B cell (primary cell): ENCODE measurements at regions of chr18 and their contacts with region 1.

Region 1: DNA sequence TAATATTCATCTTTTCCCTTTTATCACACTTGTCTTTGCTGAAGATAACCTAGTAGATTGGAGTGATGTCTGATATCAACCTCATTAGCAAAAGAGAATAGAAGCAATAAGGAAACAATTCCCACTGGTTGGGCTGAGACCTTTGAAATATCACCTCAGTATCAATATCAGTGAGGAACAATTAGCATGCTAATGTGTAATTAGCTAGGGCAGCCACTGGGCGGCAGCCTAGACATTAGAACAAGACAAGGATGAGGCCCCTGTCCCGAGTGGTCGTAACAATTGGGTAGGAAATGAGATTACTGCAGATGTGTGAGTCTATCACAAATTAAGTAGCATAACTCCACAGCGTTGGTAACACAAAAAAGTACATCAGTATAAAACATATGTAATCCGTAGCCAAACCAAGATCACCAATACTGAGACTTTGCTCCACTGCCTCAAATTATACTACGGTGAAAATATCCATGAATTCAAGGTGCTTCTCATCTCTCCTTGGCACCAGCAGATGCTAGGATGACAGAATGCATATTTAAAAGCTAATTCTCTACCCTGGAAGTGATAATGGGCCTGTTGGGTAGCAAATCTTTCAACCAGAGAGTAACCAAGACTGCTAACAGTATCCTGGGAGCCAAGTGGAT is 99.1 kb downstream of the ALPK2 start:
- DNase-seq: peak; percentile 82
- ATAC-seq: peak; percentile 78
- H3K4me3 ChIP-seq: no peak overlapping the region
- H3K4me3 Mint-ChIP-seq: no peak overlapping the region
- H3K27ac ChIP-seq: no peak overlapping the region
- H3K27ac Mint-ChIP-seq: no peak overlapping the region
- H3K4me1 ChIP-seq: peaks cover 24 to 30% of the 10 kb centered on the region in 2 donors
- H3K4me1 Mint-ChIP-seq: peaks cover 38% of the 10 kb centered on the region
- H3K27me3 ChIP-seq: no peaks in the 10 kb centered on the region
- H3K27me3 Mint-ChIP-seq: no peaks in the 10 kb centered on the region
- CTCF ChIP-seq: peak; percentile 90

Region 2: GRCh38 chr18:58552057-58552461 is 22.2 kb after region 1 on chr18:
- CTCF ChIA-PET with region 1: interaction called, 25 read pairs
- POLR2A ChIA-PET with region 1: interaction called, 3 read pairs
- intact Hi-C with region 1: no loop called
- DNase-seq: peak; percentile 83
- ATAC-seq: peak; percentile 80
- H3K4me3 ChIP-seq: no peak overlapping the region
- H3K4me3 Mint-ChIP-seq: peak overlapping the region; percentile 60
- H3K27ac ChIP-seq: peak overlapping the region in 1 of 2 donors; percentile 9
- H3K27ac Mint-ChIP-seq: peak overlapping the region; percentile 50
- H3K4me1 ChIP-seq: peaks cover 30 to 37% of the 10 kb centered on the region in 2 donors
- H3K4me1 Mint-ChIP-seq: peaks cover 40% of the 10 kb centered on the region
- H3K27me3 ChIP-seq: no peaks in the 10 kb centered on the region
- H3K27me3 Mint-ChIP-seq: no peaks in the 10 kb centered on the region
- CTCF ChIP-seq: no peak

Region 3: DNA sequence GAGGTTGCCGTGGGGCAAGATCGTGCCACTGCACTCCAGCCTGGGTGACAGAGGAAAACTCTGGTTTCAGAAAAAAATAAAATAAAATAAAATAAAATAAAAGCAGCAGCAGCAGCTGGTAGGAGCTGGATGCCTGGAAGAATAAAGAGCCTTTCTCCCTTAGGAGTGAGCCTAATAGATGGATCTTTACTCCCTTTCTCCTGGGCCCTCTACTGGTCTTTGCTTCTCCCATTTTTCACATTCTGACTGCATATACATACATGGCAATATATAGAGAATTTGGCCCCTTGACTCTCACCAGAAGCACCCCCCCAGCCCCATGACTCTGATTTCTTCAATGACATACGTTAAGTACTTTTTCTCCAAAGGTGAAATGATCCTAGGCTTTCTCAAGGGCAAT is 131.6 kb after region 1 on chr18:
- CTCF ChIA-PET with region 1: interaction called, 17 read pairs
- POLR2A ChIA-PET with region 1: no interaction called
- intact Hi-C with region 1: loop called (anchors 1 kb)
- DNase-seq: no peak
- ATAC-seq: no peak
- H3K4me3 ChIP-seq: peak overlapping the region in 1 of 5 experiments; percentile 43
- H3K4me3 Mint-ChIP-seq: peak overlapping the region; percentile 52
- H3K27ac ChIP-seq: peak overlapping the region in 1 of 2 donors; percentile 85
- H3K27ac Mint-ChIP-seq: peak overlapping the region; percentile 66
- H3K4me1 ChIP-seq: peaks cover 78% of the 10 kb centered on the region in 2 donors
- H3K4me1 Mint-ChIP-seq: peaks cover 82% of the 10 kb centered on the region
- H3K27me3 ChIP-seq: no peaks in the 10 kb centered on the region
- H3K27me3 Mint-ChIP-seq: no peaks in the 10 kb centered on the region
- CTCF ChIP-seq: no peak

Region 4: GRCh38 chr18:58676270-58676669 is 146.4 kb after region 1 on chr18:
- CTCF ChIA-PET with region 1: interaction called, 40 read pairs
- POLR2A ChIA-PET with region 1: interaction called, 4 read pairs
- intact Hi-C with region 1: loop called (anchors 1 kb)
- DNase-seq: no peak
- ATAC-seq: no peak
- H3K4me3 ChIP-seq: no peak overlapping the region
- H3K4me3 Mint-ChIP-seq: peak overlapping the region; percentile 8
- H3K27ac ChIP-seq: no peak overlapping the region
- H3K27ac Mint-ChIP-seq: peak overlapping the region; percentile 32
- H3K4me1 ChIP-seq: peaks cover 42 to 47% of the 10 kb centered on the region in 2 donors
- H3K4me1 Mint-ChIP-seq: peaks cover 60% of the 10 kb centered on the region
- H3K27me3 ChIP-seq: no peaks in the 10 kb centered on the region
- H3K27me3 Mint-ChIP-seq: no peaks in the 10 kb centered on the region
- CTCF ChIP-seq: no peak

Region 5: GRCh38 chr18:58761241-58761969 is 231.6 kb after region 1 on chr18:
- CTCF ChIA-PET with region 1: interaction called, 337 read pairs
- POLR2A ChIA-PET with region 1: interaction called, 4 read pairs
- intact Hi-C with region 1: loop called (anchors 1 kb)
- DNase-seq: peak; percentile 42
- ATAC-seq: peak; percentile 52
- H3K4me3 ChIP-seq: no peak overlapping the region
- H3K4me3 Mint-ChIP-seq: peak overlapping the region; percentile 24
- H3K27ac ChIP-seq: no peak overlapping the region
- H3K27ac Mint-ChIP-seq: peak overlapping the region; percentile 26
- H3K4me1 ChIP-seq: peaks cover 18 to 29% of the 10 kb centered on the region in 2 donors
- H3K4me1 Mint-ChIP-seq: peaks cover 25% of the 10 kb centered on the region
- H3K27me3 ChIP-seq: peaks cover 0 to 18% (median under 1%) of the 10 kb centered on the region in 4 experiments
- H3K27me3 Mint-ChIP-seq: peaks cover 13% of the 10 kb centered on the region
- CTCF ChIP-seq: no peak